ENCODE measurements at regions of chr18 and their contacts with region 1.

Region 1: GRCh38 chr18:2571200-2572143 is at the starts of genes METTL4 and NDC80:
- DNase-seq: peak; percentile 94
- H3K4me3 ChIP-seq: peak within 1 kb of the TSS; percentile 84
- H3K27ac ChIP-seq: peak within 1 kb of the TSS; percentile 78
- H3K4me1 ChIP-seq: peaks cover 19% of the 10 kb centered on the region
- CTCF ChIP-seq: no peak
- total RNA-seq, gene METTL4: 11.8 and 12.4 TPM in 2 replicates
- total RNA-seq, gene NDC80: 73.0 and 91.1 TPM in 2 replicates

Region 2: GRCh38 chr18:2606335-2606734 is 34.9 kb after region 1 on chr18:
- CTCF ChIA-PET with region 1: no interaction called
- POLR2A ChIA-PET with region 1: interaction called, 11 read pairs
- intact Hi-C with region 1: no loop called
- DNase-seq: no peak
- H3K4me3 ChIP-seq: no peak overlapping the region
- H3K27ac ChIP-seq: no peak overlapping the region
- H3K4me1 ChIP-seq: peaks cover 14% of the 10 kb centered on the region
- CTCF ChIP-seq: no peak

Region 3: GRCh38 chr18:2636126-2636631 is 64.7 kb after region 1 on chr18:
- CTCF ChIA-PET with region 1: no interaction called
- POLR2A ChIA-PET with region 1: interaction called, 9 read pairs
- intact Hi-C with region 1: loop called (anchors 2 kb)
- DNase-seq: no peak
- H3K4me3 ChIP-seq: peak overlapping the region; percentile 53
- H3K27ac ChIP-seq: peak overlapping the region; percentile 91
- H3K4me1 ChIP-seq: peaks cover 55% of the 10 kb centered on the region
- CTCF ChIP-seq: no peak